ENCODE measurements at regions of chr11 and their contacts with region 1.

Region 1: GRCh38 chr11:123511037-123511870 is 81.2 kb downstream of the GRAMD1B start:
- DNase-seq: peak; percentile 80
- H3K4me3 ChIP-seq: no peak overlapping the region
- H3K27ac ChIP-seq: no peak overlapping the region
- H3K4me1 ChIP-seq: peaks cover 6% of the 10 kb centered on the region
- H3K27me3 ChIP-seq: no peaks in the 10 kb centered on the region
- CTCF ChIP-seq: peak; percentile 89

Region 2: DNA sequence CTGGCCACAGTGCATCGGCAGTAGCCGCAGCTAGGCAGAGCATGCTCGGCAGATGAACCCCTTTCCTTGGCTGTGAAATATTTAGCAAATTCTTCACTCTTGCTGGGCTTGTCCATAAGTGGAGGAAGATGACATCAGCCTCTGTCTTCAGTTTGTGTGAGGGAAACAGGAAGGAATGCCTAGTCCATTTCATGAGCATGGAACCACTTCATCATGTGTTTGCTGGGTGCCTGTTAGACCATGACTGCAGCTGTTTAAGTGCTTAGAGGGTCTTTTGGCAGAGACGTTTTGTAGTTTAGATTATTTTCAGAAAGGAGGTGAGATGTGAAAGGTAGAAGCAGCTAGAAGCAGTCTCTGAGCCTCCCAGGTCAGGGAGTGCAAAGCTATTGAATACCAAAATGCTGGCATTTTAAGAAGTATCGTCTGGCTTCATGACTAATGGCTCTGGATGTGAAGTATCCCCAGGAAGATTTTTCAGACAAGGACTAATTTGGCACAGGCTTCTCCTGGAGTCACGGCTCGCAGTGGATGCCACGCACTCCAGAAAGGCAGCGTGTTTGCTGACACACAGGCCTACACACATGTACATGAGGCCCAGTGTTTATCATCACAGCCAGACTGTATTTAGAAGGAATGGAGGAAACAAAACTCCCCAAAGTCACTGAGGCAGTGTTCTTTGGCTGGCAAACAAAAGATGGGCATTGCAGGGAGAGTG is 124.3 kb before region 1 on chr11:
- intact Hi-C with region 1: no loop called
- DNase-seq: no peak
- H3K4me3 ChIP-seq: no peak overlapping the region
- H3K27ac ChIP-seq: peak overlapping the region; percentile 12
- H3K4me1 ChIP-seq: peaks cover 44% of the 10 kb centered on the region
- H3K27me3 ChIP-seq: no peaks in the 10 kb centered on the region
- CTCF ChIP-seq: no peak

Region 3: DNA sequence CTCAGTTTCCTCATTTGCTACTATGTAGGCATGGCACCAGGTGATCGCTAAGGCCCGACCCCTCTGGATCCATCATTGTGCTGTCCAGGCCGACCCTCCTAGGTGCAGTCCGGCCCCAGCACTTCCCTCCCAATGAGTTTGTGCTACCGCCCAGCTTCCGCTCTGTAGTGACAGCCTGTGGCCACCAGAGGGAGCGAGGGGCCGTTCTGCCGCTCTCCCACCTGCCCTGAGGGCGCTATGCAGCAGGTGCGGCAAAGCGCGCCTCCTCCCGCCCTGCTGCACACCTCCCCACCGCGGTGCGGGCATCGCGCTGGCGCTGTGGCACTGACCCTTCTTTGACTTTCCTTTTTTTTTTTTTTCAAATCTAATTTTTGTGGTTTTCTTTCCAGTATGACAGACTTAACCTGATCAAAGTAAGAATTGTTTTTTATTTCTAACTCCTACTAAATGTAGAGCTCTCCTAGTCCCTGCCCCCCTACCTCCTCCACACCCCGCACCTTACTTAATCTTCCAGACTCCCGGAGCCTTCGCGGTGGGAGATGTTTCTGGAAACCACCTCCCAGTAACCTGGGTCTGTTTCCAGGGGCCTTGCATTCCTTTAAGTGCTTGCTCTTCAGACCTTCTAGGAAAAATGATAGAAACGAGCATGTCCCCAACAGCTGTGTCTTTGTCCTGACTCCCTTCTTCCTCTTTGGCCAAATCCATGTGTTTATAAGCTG is 69.5 kb after region 1 on chr11:
- intact Hi-C with region 1: loop called (anchors 5 kb)
- DNase-seq: peak; percentile 44
- H3K4me3 ChIP-seq: no peak overlapping the region
- H3K27ac ChIP-seq: no peak overlapping the region
- H3K4me1 ChIP-seq: peaks cover 12% of the 10 kb centered on the region
- H3K27me3 ChIP-seq: peaks cover 4% of the 10 kb centered on the region
- CTCF ChIP-seq: peak; percentile 92

Region 4: GRCh38 chr11:123800036-123800435 is 288.8 kb after region 1 on chr11:
- intact Hi-C with region 1: no loop called
- DNase-seq: no peak
- H3K4me3 ChIP-seq: no peak overlapping the region
- H3K27ac ChIP-seq: no peak overlapping the region
- H3K4me1 ChIP-seq: no peaks in the 10 kb centered on the region
- H3K27me3 ChIP-seq: no peaks in the 10 kb centered on the region
- CTCF ChIP-seq: no peak

Measured in left ventricle myocardium inferior (tissue), 1 donor.